ENCODE measurements at regions of chr20 and their contacts with region 1.

Region 1: DNA sequence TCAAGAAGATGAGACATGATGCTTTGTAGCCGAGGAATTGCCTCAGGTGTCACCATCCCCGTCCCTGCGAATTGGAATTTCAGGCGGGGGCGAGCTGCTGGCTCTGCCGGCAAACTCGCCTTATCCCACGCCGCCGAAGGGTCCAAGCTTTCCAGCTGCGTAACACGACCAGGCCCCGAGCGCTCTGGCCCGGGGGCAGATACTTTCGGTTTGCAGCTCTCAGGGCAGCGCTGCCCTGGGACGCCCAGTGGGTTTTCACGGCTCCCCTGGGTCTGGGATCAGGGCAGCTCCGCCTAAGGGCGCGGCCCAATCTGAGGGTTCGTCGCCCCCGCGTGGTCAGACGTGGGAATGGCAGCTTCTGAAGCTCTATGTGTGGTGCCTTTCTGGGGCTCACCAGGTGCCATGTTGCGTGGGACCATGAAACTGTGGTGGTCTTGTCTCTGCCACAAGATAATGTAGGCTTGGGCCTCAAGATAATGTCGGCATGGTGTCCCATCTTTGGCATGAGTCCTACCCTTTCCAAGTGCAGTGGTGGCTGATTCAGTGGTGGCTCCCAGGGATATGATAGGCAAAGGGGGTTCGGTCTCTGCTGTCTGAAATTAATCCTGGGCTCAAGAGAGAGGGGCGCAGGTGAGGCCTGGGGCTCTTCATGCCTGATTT is 20.9 kb downstream of the PIGT start:
- DNase-seq: peak; percentile 90
- ATAC-seq: peak; percentile 97
- H3K4me3 Mint-ChIP-seq: peak overlapping the region; percentile 82
- H3K27ac Mint-ChIP-seq: no peak overlapping the region
- H3K4me1 Mint-ChIP-seq: peaks cover 16% of the 10 kb centered on the region
- H3K27me3 Mint-ChIP-seq: peaks cover 5% of the 10 kb centered on the region; the same call in 1 of the 2 replicates
- CTCF ChIP-seq: peak; percentile 92

Region 2: DNA sequence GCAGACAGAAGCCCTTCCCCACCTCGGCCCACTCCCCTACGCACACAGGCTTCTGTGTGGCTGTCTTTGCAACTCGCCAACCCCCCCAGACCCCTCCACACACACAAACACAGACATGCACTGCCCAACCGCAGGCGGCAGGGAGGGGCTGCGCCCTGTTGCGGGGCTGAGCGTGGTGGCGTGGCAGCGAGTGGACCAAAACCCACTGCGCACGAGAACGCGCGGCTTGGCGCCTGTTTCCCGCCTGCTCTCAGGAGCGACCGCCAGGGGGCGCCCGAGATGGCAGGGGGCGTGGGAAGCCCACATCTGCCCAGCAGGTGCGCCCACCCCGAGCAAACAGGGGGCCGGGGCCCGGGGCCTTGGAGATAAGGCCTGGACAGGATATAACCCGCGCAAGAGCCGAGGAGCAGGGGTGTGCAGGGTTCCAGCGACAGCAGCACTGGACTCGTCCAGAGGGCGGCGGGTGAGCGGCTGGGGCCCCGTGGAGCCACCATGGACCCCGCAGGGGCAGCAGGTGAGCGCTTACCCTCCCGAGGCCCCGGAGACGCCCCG is 130.4 kb before region 1 on chr20 and contains the start of gene RBPJL:
- CTCF ChIA-PET with region 1: interaction called, 51 read pairs
- POLR2A ChIA-PET with region 1: no interaction called
- DNase-seq: peak; percentile 79
- ATAC-seq: peak; percentile 8; the same call in 1 of the 2 replicates
- H3K4me3 Mint-ChIP-seq: 0 out of 2 replicates have a peak within 1 kb of the TSS, but pooled peaks have one; percentile 22
- H3K27ac Mint-ChIP-seq: no peak within 1 kb of the TSS
- H3K4me1 Mint-ChIP-seq: peaks cover 22% of the 10 kb centered on the region
- H3K27me3 Mint-ChIP-seq: peaks cover 30% of the 10 kb centered on the region
- CTCF ChIP-seq: peak; percentile 99
- total RNA-seq, gene RBPJL: 0.78 to 0.85 TPM (median 0.80 TPM) in 3 replicates

Region 3: GRCh38 chr20:45341939-45342859 is 94.7 kb before region 1 on chr20:
- CTCF ChIA-PET with region 1: interaction called, 27 read pairs
- POLR2A ChIA-PET with region 1: interaction called, 3 read pairs
- DNase-seq: peak; percentile 82
- ATAC-seq: peak; percentile 72
- H3K4me3 Mint-ChIP-seq: peak overlapping the region; percentile 65
- H3K27ac Mint-ChIP-seq: peak overlapping the region; percentile 98
- H3K4me1 Mint-ChIP-seq: peaks cover 99% of the 10 kb centered on the region
- H3K27me3 Mint-ChIP-seq: no peaks in the 10 kb centered on the region
- CTCF ChIP-seq: no peak

Region 4: DNA sequence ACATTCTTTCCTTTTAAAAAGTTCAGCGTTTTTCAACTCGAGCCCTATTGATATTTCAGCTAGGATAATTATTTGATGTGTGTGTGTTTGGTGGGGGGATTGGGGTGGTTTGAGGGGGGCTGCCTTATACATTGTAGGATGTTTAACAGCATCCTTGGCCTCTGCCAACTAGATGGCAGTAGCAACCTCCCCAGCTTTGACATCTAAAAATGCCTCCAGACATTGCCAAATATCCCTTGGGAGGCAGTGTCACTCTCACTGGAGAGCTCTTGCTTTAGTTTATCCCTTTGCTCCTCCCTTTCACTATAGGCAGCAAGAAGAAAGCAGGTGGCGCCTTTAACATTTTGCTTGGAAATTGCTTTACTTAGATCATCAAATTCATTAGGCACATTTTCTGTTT is 44.1 kb before region 1 on chr20:
- CTCF ChIA-PET with region 1: interaction called, 23 read pairs
- POLR2A ChIA-PET with region 1: no interaction called
- DNase-seq: no peak
- ATAC-seq: peak; percentile 69
- H3K4me3 Mint-ChIP-seq: no peak overlapping the region
- H3K27ac Mint-ChIP-seq: no peak overlapping the region
- H3K4me1 Mint-ChIP-seq: no peaks in the 10 kb centered on the region
- H3K27me3 Mint-ChIP-seq: no peaks in the 10 kb centered on the region
- CTCF ChIP-seq: no peak

Region 5: GRCh38 chr20:45450097-45450818 is 13.4 kb after region 1 on chr20:
- CTCF ChIA-PET with region 1: interaction called, 60 read pairs
- POLR2A ChIA-PET with region 1: interaction called, 3 read pairs
- DNase-seq: no peak
- ATAC-seq: peak; percentile 59
- H3K4me3 Mint-ChIP-seq: no peak overlapping the region
- H3K27ac Mint-ChIP-seq: no peak overlapping the region
- H3K4me1 Mint-ChIP-seq: peaks cover 3% of the 10 kb centered on the region; the same call in 1 of the 2 replicates
- H3K27me3 Mint-ChIP-seq: peaks cover 3% of the 10 kb centered on the region; the same call in 1 of the 2 replicates
- CTCF ChIP-seq: peak; percentile 70

Region 6: GRCh38 chr20:45672765-45673164 is 235.9 kb after region 1 on chr20:
- CTCF ChIA-PET with region 1: no interaction called
- POLR2A ChIA-PET with region 1: no interaction called
- DNase-seq: no peak
- ATAC-seq: no peak
- H3K4me3 Mint-ChIP-seq: no peak overlapping the region
- H3K27ac Mint-ChIP-seq: no peak overlapping the region
- H3K4me1 Mint-ChIP-seq: no peaks in the 10 kb centered on the region
- H3K27me3 Mint-ChIP-seq: no peaks in the 10 kb centered on the region
- CTCF ChIP-seq: no peak

Region 7: GRCh38 chr20:45857114-45857881 is 420.4 kb after region 1 on chr20 and contains the starts of genes ACOT8 and ZSWIM3:
- CTCF ChIA-PET with region 1: no interaction called
- POLR2A ChIA-PET with region 1: no interaction called
- DNase-seq: peak; percentile 95
- ATAC-seq: peak; percentile 90
- H3K4me3 Mint-ChIP-seq: peak within 1 kb of the TSS; percentile 92
- H3K27ac Mint-ChIP-seq: peak within 1 kb of the TSS; percentile 95
- H3K4me1 Mint-ChIP-seq: peaks cover 60% of the 10 kb centered on the region
- H3K27me3 Mint-ChIP-seq: no peaks in the 10 kb centered on the region
- CTCF ChIP-seq: no peak
- total RNA-seq, gene ACOT8: 38.1 to 41.1 TPM (median 39.4 TPM) in 3 replicates
- total RNA-seq, gene ZSWIM3: 3.4 to 5.4 TPM (median 4.7 TPM) in 3 replicates

Measured in WTC11 (cell line).